B cell (primary cell): ENCODE measurements at regions of chr2 and their contacts with region 1.

Region 1: GRCh38 chr2:134207564-134208209 is 46.2 kb upstream of the MGAT5 start:
- DNase-seq: peak; percentile 68
- ATAC-seq: peak; percentile 82
- H3K4me3 ChIP-seq: no peak overlapping the region
- H3K4me3 Mint-ChIP-seq: no peak overlapping the region
- H3K27ac ChIP-seq: peak overlapping the region in 1 of 2 donors; percentile 64
- H3K27ac Mint-ChIP-seq: peak overlapping the region; percentile 69
- H3K4me1 ChIP-seq: peaks cover 49 to 53% of the 10 kb centered on the region in 2 donors
- H3K4me1 Mint-ChIP-seq: peaks cover 12% of the 10 kb centered on the region
- H3K27me3 ChIP-seq: no peaks in the 10 kb centered on the region
- H3K27me3 Mint-ChIP-seq: no peaks in the 10 kb centered on the region
- CTCF ChIP-seq: peak; percentile 75

Region 2: DNA sequence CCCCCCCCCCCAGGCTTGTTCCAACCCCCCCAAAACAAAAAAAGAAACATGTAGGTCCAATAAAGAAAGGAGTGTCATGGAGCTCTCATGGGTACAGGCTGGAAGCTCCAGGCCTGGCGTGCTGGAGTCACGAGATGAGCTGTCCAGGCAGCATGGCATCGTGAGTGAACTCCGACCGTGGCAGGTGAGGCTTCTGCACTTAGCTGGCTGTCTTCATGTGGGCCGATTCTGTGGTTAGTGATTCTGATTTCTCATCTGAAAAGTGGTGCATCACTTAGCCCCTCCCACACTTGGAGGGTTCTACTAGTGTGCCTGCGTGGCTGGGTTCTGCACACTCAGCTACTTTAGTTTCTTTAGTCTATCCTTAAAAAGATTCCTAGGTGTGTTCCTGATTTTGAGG is 80.2 kb before region 1 on chr2:
- CTCF ChIA-PET with region 1: interaction called, 23 read pairs
- POLR2A ChIA-PET with region 1: no interaction called
- intact Hi-C with region 1: no loop called
- DNase-seq: no peak
- ATAC-seq: peak; percentile 50
- H3K4me3 ChIP-seq: no peak overlapping the region
- H3K4me3 Mint-ChIP-seq: peak overlapping the region; percentile 73
- H3K27ac ChIP-seq: peak overlapping the region in 1 of 2 donors; percentile 65
- H3K27ac Mint-ChIP-seq: peak overlapping the region; percentile 71
- H3K4me1 ChIP-seq: peaks cover 70 to 74% of the 10 kb centered on the region in 2 donors
- H3K4me1 Mint-ChIP-seq: peaks cover 85% of the 10 kb centered on the region
- H3K27me3 ChIP-seq: no peaks in the 10 kb centered on the region
- H3K27me3 Mint-ChIP-seq: no peaks in the 10 kb centered on the region
- CTCF ChIP-seq: no peak

Region 3: GRCh38 chr2:134218930-134219658 is 11.4 kb after region 1 on chr2:
- CTCF ChIA-PET with region 1: interaction called, 72 read pairs
- POLR2A ChIA-PET with region 1: no interaction called
- intact Hi-C with region 1: no loop called
- DNase-seq: peak; percentile 76
- ATAC-seq: peak; percentile 60
- H3K4me3 ChIP-seq: peak overlapping the region in 2 of 5 experiments; percentile 18 to 21
- H3K4me3 Mint-ChIP-seq: peak overlapping the region; percentile 67
- H3K27ac ChIP-seq: peak overlapping the region; percentile 74 to 84
- H3K27ac Mint-ChIP-seq: peak overlapping the region; percentile 91
- H3K4me1 ChIP-seq: peaks cover 52 to 55% of the 10 kb centered on the region in 2 donors
- H3K4me1 Mint-ChIP-seq: peaks cover 77% of the 10 kb centered on the region
- H3K27me3 ChIP-seq: no peaks in the 10 kb centered on the region
- H3K27me3 Mint-ChIP-seq: no peaks in the 10 kb centered on the region
- CTCF ChIP-seq: no peak

Region 4: GRCh38 chr2:134232868-134233727 is 25.4 kb after region 1 on chr2:
- CTCF ChIA-PET with region 1: interaction called, 31 read pairs
- POLR2A ChIA-PET with region 1: no interaction called
- intact Hi-C with region 1: no loop called
- DNase-seq: peak; percentile 63
- ATAC-seq: peak; percentile 31
- H3K4me3 ChIP-seq: peak overlapping the region in 3 of 5 experiments; percentile 7 to 48 (median 30)
- H3K4me3 Mint-ChIP-seq: peak overlapping the region; percentile 55
- H3K27ac ChIP-seq: peak overlapping the region; percentile 63 to 79
- H3K27ac Mint-ChIP-seq: peak overlapping the region; percentile 87
- H3K4me1 ChIP-seq: peaks cover 76% of the 10 kb centered on the region in 2 donors
- H3K4me1 Mint-ChIP-seq: peaks cover 88% of the 10 kb centered on the region
- H3K27me3 ChIP-seq: no peaks in the 10 kb centered on the region
- H3K27me3 Mint-ChIP-seq: no peaks in the 10 kb centered on the region
- CTCF ChIP-seq: no peak

Region 5: DNA sequence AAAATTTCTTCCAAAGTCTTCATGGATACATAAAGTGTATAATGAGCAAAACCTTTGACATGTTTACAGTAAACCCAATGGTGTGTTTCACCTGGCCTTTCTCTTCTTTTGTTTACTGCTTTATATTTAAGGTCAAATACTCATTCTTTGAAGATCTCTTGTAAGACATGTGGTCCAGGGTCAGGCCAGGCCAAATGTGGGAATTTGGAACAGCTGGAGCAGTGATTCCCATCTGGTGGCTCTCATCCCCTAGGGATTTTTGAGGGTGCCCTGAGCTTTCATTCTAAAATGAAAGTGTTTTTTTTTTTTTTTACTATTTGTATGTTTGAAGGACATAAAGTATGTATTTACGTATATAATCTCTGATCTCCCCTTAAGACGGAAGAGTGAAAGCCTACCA is 32.4 kb after region 1 on chr2:
- CTCF ChIA-PET with region 1: interaction called, 60 read pairs
- POLR2A ChIA-PET with region 1: no interaction called
- intact Hi-C with region 1: loop called (anchors 5 kb)
- DNase-seq: no peak
- ATAC-seq: no peak
- H3K4me3 ChIP-seq: no peak overlapping the region
- H3K4me3 Mint-ChIP-seq: no peak overlapping the region
- H3K27ac ChIP-seq: peak overlapping the region in 1 of 2 donors; percentile 0
- H3K27ac Mint-ChIP-seq: no peak overlapping the region
- H3K4me1 ChIP-seq: peaks cover 72 to 76% of the 10 kb centered on the region in 2 donors
- H3K4me1 Mint-ChIP-seq: peaks cover 82% of the 10 kb centered on the region
- H3K27me3 ChIP-seq: no peaks in the 10 kb centered on the region
- H3K27me3 Mint-ChIP-seq: no peaks in the 10 kb centered on the region
- CTCF ChIP-seq: no peak

Region 6: DNA sequence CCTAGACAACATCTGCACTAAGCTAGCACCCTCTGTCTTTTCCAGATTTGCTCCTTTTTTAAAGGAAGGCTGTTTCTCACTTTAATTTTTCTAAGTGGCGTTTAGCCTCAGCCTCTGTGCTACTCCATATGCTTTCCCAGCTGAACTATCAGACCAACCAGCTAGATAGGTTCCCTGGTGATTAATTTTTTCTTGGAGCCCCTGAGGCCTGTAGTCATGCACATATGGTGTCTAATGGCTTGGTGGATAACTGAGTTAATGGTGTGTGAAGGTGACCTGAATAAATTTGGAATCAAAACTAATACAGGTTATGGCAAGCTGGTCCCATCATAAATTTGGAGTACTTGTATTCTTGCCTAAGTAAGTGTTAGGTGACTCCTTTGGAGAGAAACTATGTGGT is 181.7 kb after region 1 on chr2:
- CTCF ChIA-PET with region 1: no interaction called
- POLR2A ChIA-PET with region 1: no interaction called
- intact Hi-C with region 1: no loop called
- DNase-seq: no peak
- ATAC-seq: no peak
- H3K4me3 ChIP-seq: no peak overlapping the region
- H3K4me3 Mint-ChIP-seq: no peak overlapping the region
- H3K27ac ChIP-seq: peak overlapping the region in 1 of 2 donors; percentile 40
- H3K27ac Mint-ChIP-seq: no peak overlapping the region
- H3K4me1 ChIP-seq: peaks cover 13 to 21% of the 10 kb centered on the region in 2 donors
- H3K4me1 Mint-ChIP-seq: peaks cover 24% of the 10 kb centered on the region
- H3K27me3 ChIP-seq: no peaks in the 10 kb centered on the region
- H3K27me3 Mint-ChIP-seq: no peaks in the 10 kb centered on the region
- CTCF ChIP-seq: no peak

Region 7: GRCh38 chr2:134679745-134680144 is 472.1 kb after region 1 on chr2:
- CTCF ChIA-PET with region 1: no interaction called
- POLR2A ChIA-PET with region 1: no interaction called
- intact Hi-C with region 1: no loop called
- DNase-seq: peak; percentile 76
- ATAC-seq: peak; percentile 90
- H3K4me3 ChIP-seq: no peak overlapping the region
- H3K4me3 Mint-ChIP-seq: peak overlapping the region; percentile 73
- H3K27ac ChIP-seq: no peak overlapping the region
- H3K27ac Mint-ChIP-seq: peak overlapping the region; percentile 10
- H3K4me1 ChIP-seq: peaks cover 18 to 25% of the 10 kb centered on the region in 2 donors
- H3K4me1 Mint-ChIP-seq: peaks cover 31% of the 10 kb centered on the region
- H3K27me3 ChIP-seq: no peaks in the 10 kb centered on the region
- H3K27me3 Mint-ChIP-seq: no peaks in the 10 kb centered on the region
- CTCF ChIP-seq: no peak